Naive thymus-derived CD4-positive, alpha-beta T cell (primary cell): ENCODE measurements at regions of chr11 and their contacts with region 1.

Region 1: GRCh38 chr11:35047179-35047578 is 91.8 kb upstream of the CD44 start:
- DNase-seq: peak in 8 of 9 donors; percentile 47 to 88 (median 84)
- ATAC-seq: peak; percentile 79
- H3K4me3 ChIP-seq: no peak overlapping the region
- H3K4me3 Mint-ChIP-seq: peak overlapping the region; percentile 27 to 84 (median 71)
- H3K27ac ChIP-seq: peak overlapping the region; percentile 89
- H3K27ac Mint-ChIP-seq: peak overlapping the region; percentile 90 to 100 (median 99)
- H3K4me1 ChIP-seq: peaks cover 44 to 87% of the 10 kb centered on the region in 2 donors
- H3K4me1 Mint-ChIP-seq: peaks cover 66 to 99% (median 95%) of the 10 kb centered on the region in 7 donors
- H3K27me3 ChIP-seq: no peaks in the 10 kb centered on the region
- H3K27me3 Mint-ChIP-seq: peaks cover 0 to 7% (median 0%) of the 10 kb centered on the region in 5 donors

Region 2: GRCh38 chr11:35058669-35059434 is 11.7 kb after region 1 on chr11:
- CTCF ChIA-PET with region 1: interaction called, 5 read pairs
- POLR2A ChIA-PET with region 1: interaction called, 24 read pairs
- intact Hi-C with region 1: loop called in 1 of 2 experiments (anchors 1 kb)
- DNase-seq: peak in 2 of 9 donors; percentile 20
- ATAC-seq: peak; percentile 69
- H3K4me3 ChIP-seq: no peak overlapping the region
- H3K4me3 Mint-ChIP-seq: peak overlapping the region; percentile 2 to 75 (median 48)
- H3K27ac ChIP-seq: peak overlapping the region; percentile 41
- H3K27ac Mint-ChIP-seq: peak overlapping the region in 8 of 9 donors; percentile 44 to 93 (median 80)
- H3K4me1 ChIP-seq: peaks cover 19 to 24% of the 10 kb centered on the region in 2 donors
- H3K4me1 Mint-ChIP-seq: peaks cover 27 to 56% (median 44%) of the 10 kb centered on the region in 7 donors
- H3K27me3 ChIP-seq: no peaks in the 10 kb centered on the region
- H3K27me3 Mint-ChIP-seq: no peaks in the 10 kb centered on the region

Region 3: DNA sequence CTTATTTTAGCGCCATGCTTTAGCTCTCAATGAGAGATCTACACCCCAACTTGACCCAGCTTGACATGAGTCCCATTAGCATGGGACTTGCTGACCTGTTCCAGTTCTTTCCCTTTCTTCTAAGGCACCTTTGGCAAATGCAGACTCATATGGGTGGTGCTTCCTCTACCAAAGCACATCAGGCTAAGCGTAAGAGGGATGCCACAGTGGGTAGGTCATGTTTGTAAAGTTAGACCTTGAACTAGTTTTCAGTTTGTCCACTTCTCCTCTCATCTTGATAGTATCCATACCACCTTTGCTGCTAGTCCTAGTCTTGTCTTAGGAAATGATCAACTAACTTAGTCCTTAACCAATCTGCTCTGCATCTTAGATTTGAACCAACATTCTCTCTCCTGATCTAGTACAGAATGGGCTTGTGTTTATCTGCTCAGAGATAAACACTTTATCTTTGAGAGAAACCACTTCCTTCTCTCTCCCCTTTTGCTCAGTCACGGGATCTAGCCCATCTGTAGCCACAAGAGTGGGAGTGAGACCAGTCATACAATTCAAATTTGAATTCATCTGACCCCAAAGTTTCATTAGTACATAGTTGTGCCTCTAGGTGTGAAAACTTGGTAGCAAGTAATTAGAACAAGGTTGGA is 19.7 kb after region 1 on chr11:
- CTCF ChIA-PET with region 1: interaction called, 3 read pairs
- POLR2A ChIA-PET with region 1: interaction called, 21 read pairs
- intact Hi-C with region 1: loop called (anchors 2 kb)
- DNase-seq: peak in 1 of 9 donors; percentile 44
- ATAC-seq: peak; percentile 86
- H3K4me3 ChIP-seq: no peak overlapping the region
- H3K4me3 Mint-ChIP-seq: peak overlapping the region; percentile 1 to 69 (median 46)
- H3K27ac ChIP-seq: no peak overlapping the region
- H3K27ac Mint-ChIP-seq: peak overlapping the region; percentile 34 to 80 (median 60)
- H3K4me1 ChIP-seq: peaks cover 19 to 34% of the 10 kb centered on the region in 2 donors
- H3K4me1 Mint-ChIP-seq: peaks cover 16 to 54% (median 37%) of the 10 kb centered on the region in 7 donors
- H3K27me3 ChIP-seq: no peaks in the 10 kb centered on the region
- H3K27me3 Mint-ChIP-seq: peaks cover 0 to 7% (median 0%) of the 10 kb centered on the region in 5 donors